Posterior vena cava (tissue), 2 donors: ENCODE measurements at regions of chr11 and their contacts with region 1.

Region 1: GRCh38 chr11:18408558-18409242 is 3.4 kb upstream of the LDHC start:
- DNase-seq: no peak

Region 2: DNA sequence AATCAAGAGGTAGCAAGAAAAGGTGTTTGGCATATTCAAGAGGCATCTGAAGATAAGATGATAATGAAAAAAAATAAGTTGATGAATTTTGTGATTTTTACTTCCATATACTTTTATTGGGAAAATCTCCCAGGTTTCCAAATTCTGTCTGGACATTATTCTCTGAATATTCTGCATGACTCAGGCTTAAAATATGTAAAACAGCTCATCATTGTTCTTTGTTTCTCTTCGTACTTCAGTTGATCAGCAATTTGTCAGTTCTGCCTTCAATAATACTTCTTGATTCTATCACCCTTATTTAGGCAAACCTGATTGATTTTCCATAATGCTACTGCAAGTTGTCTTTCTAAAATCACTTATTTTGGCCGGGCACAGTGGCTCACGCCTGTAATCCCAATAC is 56.1 kb before region 1 on chr11:
- intact Hi-C with region 1: loop called in 1 of 2 experiments (anchors 10 kb)
- DNase-seq: no peak